ENCODE measurements at regions of chr10 and their contacts with region 1.

Region 1: GRCh38 chr10:20858292-20859124 is 38.6 kb downstream of the NEBL start:
- DNase-seq: peak; percentile 7
- ATAC-seq: 0 out of 2 replicates have a peak, but pooled peaks have one; percentile 58
- H3K4me3 ChIP-seq: no peak overlapping the region
- H3K27ac ChIP-seq: no peak overlapping the region
- H3K4me1 ChIP-seq: no peaks in the 10 kb centered on the region
- H3K27me3 ChIP-seq: no peaks in the 10 kb centered on the region
- CTCF ChIP-seq: peak; percentile 45; the same call in 1 of the 2 replicates

Region 2: GRCh38 chr10:20726381-20726780 is 132.1 kb before region 1 on chr10:
- CTCF ChIA-PET with region 1: no interaction called
- POLR2A ChIA-PET with region 1: no interaction called
- in situ Hi-C with region 1: no loop called
- intact Hi-C with region 1: no loop called
- DNase-seq: no peak
- ATAC-seq: no peak
- H3K4me3 ChIP-seq: no peak overlapping the region
- H3K27ac ChIP-seq: no peak overlapping the region
- H3K4me1 ChIP-seq: no peaks in the 10 kb centered on the region
- H3K27me3 ChIP-seq: no peaks in the 10 kb centered on the region
- CTCF ChIP-seq: no peak

Region 3: GRCh38 chr10:21166557-21167287 is 308.2 kb after region 1 on chr10:
- CTCF ChIA-PET with region 1: no interaction called
- POLR2A ChIA-PET with region 1: no interaction called
- in situ Hi-C with region 1: no loop called
- intact Hi-C with region 1: loop called (anchors 10 kb)
- DNase-seq: no peak
- ATAC-seq: peak; percentile 73
- H3K4me3 ChIP-seq: peak overlapping the region; percentile 18 to 45
- H3K27ac ChIP-seq: peak overlapping the region; percentile 86
- H3K4me1 ChIP-seq: peaks cover 60% of the 10 kb centered on the region
- H3K27me3 ChIP-seq: no peaks in the 10 kb centered on the region
- CTCF ChIP-seq: no peak

Region 4: GRCh38 chr10:21208666-21209316 is 350.3 kb after region 1 on chr10:
- CTCF ChIA-PET with region 1: no interaction called
- POLR2A ChIA-PET with region 1: no interaction called
- in situ Hi-C with region 1: no loop called
- intact Hi-C with region 1: no loop called
- DNase-seq: no peak
- ATAC-seq: no peak
- H3K4me3 ChIP-seq: no peak overlapping the region
- H3K27ac ChIP-seq: no peak overlapping the region
- H3K4me1 ChIP-seq: no peaks in the 10 kb centered on the region; the same call in 1 of the 2 replicates
- H3K27me3 ChIP-seq: no peaks in the 10 kb centered on the region
- CTCF ChIP-seq: no peak

Region 5: GRCh38 chr10:21273400-21273932 is 415.0 kb after region 1 on chr10:
- CTCF ChIA-PET with region 1: interaction called, 5 read pairs
- POLR2A ChIA-PET with region 1: no interaction called
- in situ Hi-C with region 1: no loop called
- intact Hi-C with region 1: loop called (anchors 2 kb)
- DNase-seq: no peak
- ATAC-seq: peak; percentile 55
- H3K4me3 ChIP-seq: no peak overlapping the region
- H3K27ac ChIP-seq: peak overlapping the region; percentile 87
- H3K4me1 ChIP-seq: peaks cover 20% of the 10 kb centered on the region
- H3K27me3 ChIP-seq: no peaks in the 10 kb centered on the region
- CTCF ChIP-seq: no peak

Region 6: GRCh38 chr10:21385996-21386610 is 527.6 kb after region 1 on chr10:
- CTCF ChIA-PET with region 1: interaction called, 10 read pairs
- POLR2A ChIA-PET with region 1: no interaction called
- in situ Hi-C with region 1: no loop called
- intact Hi-C with region 1: no loop called
- DNase-seq: no peak
- ATAC-seq: no peak
- H3K4me3 ChIP-seq: no peak overlapping the region
- H3K27ac ChIP-seq: peak overlapping the region; percentile 83
- H3K4me1 ChIP-seq: peaks cover 9% of the 10 kb centered on the region; the same call in 1 of the 2 replicates
- H3K27me3 ChIP-seq: no peaks in the 10 kb centered on the region
- CTCF ChIP-seq: no peak; the same call in 1 of the 2 replicates

Measured in Panc1 (cell line).